ENCODE measurements at regions of chr13 and their contacts with region 1.

Region 1: DNA sequence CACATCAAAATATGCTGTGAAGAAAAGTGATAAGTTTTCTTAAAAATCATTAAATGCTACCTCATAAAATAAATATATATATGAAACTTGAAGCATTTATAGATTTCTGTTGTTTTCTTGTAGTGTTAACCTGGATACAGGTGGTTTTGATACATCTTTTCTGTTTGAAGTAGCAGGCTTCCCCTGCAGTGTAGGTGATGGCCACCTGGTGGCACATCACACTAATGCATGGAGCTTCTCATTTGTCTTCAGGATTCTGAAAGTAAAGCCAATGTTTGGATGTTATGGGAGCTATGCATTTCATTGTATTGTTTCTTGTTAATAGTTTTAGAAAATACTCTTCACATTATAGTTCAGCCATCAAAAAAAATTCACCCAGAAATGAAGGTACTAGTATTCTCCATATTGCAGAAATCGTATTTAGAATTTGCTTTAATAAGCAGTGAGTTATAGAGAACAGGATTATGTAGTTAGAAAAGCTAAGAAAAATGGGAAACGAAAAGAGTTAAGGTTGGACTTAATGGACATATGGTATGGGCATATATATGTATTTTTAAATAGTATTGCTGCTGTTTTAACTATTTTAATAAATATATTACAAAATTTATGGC is 18.7 kb downstream of the GPR180 start:
- DNase-seq: no peak
- H3K4me3 Mint-ChIP-seq: no peak overlapping the region
- H3K27ac Mint-ChIP-seq: no peak overlapping the region
- H3K4me1 Mint-ChIP-seq: peaks cover 21% of the 10 kb centered on the region
- H3K27me3 Mint-ChIP-seq: no peaks in the 10 kb centered on the region

Region 2: DNA sequence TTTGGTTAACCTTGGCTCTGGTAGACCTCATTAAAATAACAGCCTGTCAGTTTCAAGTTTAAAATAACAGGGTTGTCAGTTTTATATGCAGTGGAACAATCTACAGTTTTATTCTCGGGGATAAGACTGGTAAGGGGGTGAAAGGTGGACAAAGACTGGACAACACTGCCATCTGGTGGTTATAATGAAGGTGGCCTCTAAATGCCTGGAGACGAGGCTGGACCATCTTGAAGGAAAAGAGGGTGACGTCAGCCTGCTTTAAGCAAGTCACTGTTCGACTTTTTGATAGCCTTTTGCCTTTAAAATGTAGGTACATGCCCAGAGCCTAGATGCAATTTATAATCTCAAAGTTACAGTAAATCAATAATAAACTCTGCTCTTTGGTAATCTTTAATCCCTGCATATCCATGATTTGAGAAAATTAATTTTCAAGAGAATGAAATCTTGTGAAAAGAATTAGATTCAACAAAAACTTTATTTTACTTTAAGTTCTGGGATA is 257.9 kb before region 1 on chr13:
- intact Hi-C with region 1: loop called (anchors 1 kb)
- DNase-seq: peak; percentile 60
- H3K4me3 Mint-ChIP-seq: no peak overlapping the region
- H3K27ac Mint-ChIP-seq: no peak overlapping the region
- H3K4me1 Mint-ChIP-seq: peaks cover 8% of the 10 kb centered on the region
- H3K27me3 Mint-ChIP-seq: peaks cover 14% of the 10 kb centered on the region

Region 3: GRCh38 chr13:94435604-94436226 is 184.7 kb before region 1 on chr13:
- intact Hi-C with region 1: loop called (anchors 1 kb)
- DNase-seq: no peak
- H3K4me3 Mint-ChIP-seq: no peak overlapping the region
- H3K27ac Mint-ChIP-seq: no peak overlapping the region
- H3K4me1 Mint-ChIP-seq: peaks cover 15% of the 10 kb centered on the region
- H3K27me3 Mint-ChIP-seq: peaks cover 5% of the 10 kb centered on the region

Region 4: DNA sequence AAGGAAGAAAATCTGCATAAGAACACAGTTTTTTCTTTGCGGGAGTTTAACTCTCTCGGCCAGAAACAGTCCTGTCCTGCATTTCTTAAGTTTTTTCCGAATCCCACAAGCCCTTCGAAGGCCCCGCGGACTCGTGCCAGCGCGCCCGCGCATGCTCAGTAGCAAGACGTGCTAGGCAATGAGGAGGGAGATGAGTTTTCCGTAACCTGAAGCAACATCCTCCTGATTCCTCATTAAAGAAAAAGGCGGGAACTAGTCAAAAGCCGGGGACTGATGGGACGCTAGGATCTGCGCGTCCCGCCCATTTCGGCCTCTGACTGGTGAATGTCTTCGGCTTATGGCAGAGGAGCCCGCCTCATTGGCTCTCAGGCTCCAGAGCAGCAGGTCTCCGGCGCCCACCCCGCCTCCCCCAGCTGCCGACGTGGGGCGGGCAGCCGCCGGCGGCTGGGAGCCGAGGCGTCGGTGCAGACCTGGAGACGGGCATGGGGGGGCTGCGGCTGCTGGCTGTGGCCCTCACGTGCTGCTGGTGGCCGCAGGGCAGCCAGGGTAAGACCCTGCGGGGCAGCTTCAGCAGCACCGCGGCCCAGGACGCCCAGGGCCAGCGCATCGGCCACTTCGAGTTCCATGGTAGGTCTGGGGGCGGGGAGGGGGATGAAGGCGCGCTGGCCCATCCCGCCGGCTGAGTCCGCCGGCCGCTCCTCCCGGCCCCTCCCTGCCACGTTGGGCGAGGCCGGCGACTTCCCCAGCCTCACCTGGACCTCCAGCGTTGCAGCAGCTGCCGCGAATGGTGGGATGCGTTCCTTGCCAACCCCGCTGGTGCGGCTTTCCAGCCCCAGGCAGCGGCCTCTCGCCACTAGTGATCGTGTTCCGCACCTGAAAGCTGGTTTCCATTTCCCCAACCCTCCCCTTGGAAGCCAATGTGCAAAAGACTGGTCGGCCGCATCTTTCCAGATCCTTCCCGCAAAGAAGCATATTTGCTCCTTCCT is 18.7 kb before region 1 on chr13 and contains the start of gene GPR180:
- intact Hi-C with region 1: loop called (anchors 2 kb)
- DNase-seq: peak; percentile 89
- H3K4me3 Mint-ChIP-seq: peak within 1 kb of the TSS; percentile 88
- H3K27ac Mint-ChIP-seq: peak within 1 kb of the TSS; percentile 75
- H3K4me1 Mint-ChIP-seq: peaks cover 31% of the 10 kb centered on the region
- H3K27me3 Mint-ChIP-seq: no peaks in the 10 kb centered on the region
- total RNA-seq, gene GPR180: 9.6 and 11.1 TPM in 2 replicates

Region 5: DNA sequence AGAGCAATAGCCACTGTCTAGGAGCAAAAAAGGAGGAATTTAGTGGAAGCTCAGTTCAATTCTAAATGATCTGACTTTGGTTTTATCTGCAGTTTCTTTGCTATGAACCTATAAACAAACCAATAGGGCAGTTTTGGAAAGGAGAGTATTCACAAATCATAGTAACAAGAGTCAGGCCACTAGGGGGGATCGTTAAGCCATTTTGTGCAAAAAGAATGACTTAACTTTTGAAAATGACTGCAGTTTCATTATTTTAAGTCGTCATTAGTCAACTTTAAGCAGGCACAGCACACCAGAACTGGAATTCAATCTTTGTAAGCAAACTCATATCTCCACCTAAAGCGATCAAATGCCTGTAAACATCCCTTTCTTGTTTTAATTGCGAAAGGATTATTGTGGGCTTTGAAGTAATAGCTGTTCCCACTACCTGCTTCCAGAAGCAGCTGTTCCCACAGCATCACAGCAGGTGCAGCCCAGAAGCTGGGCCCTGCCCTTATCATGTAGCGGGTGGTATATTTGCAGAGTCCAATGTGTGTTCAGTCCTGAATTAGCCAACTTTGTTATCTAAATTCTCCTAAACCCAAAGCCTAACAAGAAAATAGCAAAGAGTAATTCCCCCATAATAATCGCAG is 40.4 kb after region 1 on chr13:
- intact Hi-C with region 1: loop called (anchors 2 kb)
- DNase-seq: no peak
- H3K4me3 Mint-ChIP-seq: no peak overlapping the region
- H3K27ac Mint-ChIP-seq: no peak overlapping the region
- H3K4me1 Mint-ChIP-seq: peaks cover 51% of the 10 kb centered on the region
- H3K27me3 Mint-ChIP-seq: peaks cover 8% of the 10 kb centered on the region

Region 6: DNA sequence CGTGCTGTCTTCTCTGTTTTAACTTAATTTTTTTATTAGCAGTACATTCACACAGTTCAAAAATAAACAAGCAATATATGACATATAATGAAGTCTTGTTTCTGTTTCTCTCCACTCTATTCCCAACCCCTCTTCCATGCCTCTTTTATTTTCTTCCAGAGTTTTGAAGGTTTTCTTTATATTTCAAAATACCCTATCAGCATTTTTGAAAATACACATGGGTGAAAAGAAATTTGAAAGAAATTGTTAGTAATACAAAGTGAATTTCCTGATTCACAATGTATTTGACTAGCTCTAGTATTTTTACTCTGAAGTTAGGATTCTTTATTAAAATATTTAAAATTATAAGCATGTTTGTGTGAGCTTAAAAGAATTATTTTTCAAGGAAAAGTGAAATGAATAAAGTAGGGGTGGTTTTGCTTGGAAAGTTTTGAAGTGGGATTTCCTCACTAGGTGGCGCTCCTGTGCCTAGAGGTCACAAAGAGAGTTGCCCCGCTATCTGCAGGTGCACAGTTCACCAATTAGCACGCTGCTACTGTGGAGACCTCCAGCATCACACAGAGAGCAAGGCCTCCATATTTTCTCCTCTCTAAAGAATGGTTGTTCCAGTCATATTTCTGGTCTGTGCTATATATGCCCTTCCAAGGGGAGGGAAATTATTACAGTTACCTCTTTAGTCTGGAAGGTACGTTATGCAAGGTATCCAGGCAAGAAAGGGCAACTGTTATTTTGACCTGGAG is 54.4 kb after region 1 on chr13:
- intact Hi-C with region 1: loop called (anchors 2 kb)
- DNase-seq: no peak
- H3K4me3 Mint-ChIP-seq: no peak overlapping the region
- H3K27ac Mint-ChIP-seq: no peak overlapping the region
- H3K4me1 Mint-ChIP-seq: no peaks in the 10 kb centered on the region
- H3K27me3 Mint-ChIP-seq: peaks cover 19% of the 10 kb centered on the region

Region 7: GRCh38 chr13:95480131-95480545 is 859.7 kb after region 1 on chr13:
- intact Hi-C with region 1: loop called (anchors 2 kb)
- DNase-seq: no peak
- H3K4me3 Mint-ChIP-seq: peak overlapping the region; percentile 21
- H3K27ac Mint-ChIP-seq: peak overlapping the region; percentile 23
- H3K4me1 Mint-ChIP-seq: peaks cover 25% of the 10 kb centered on the region
- H3K27me3 Mint-ChIP-seq: peaks cover 6% of the 10 kb centered on the region